Psoas muscle (tissue), 8 donors: ENCODE measurements at regions of chr17 and their contacts with region 1.

Region 1: DNA sequence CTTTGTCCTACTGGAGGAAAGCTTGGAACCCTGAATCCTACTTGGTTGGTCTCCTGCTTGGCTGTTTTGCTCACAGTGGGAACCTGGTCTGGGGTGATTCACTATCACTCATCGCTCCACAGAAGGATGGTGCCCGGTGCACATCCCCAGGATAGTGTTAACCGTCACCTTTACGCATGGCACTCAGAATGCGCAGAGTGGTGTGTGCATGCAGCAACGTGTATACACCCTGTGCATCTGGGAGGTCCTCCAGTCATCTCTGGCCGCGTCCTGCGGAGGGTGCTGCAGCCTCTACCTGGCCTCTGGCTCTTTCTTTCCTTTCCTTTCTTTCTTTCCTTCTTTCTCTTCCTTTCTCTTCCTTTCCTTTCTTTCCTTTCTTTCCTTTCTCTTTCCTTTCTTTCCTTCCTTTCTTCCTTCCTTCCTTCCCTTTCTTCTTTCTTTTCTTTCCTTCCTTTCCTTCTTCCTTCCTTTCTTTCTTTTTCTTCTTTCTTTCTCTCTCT is 13.2 kb downstream of the SOCS3 start:
- DNase-seq: no peak
- ATAC-seq: peak in 3 of 4 donors; percentile 8 to 33 (median 15)
- H3K4me3 ChIP-seq: no peak overlapping the region
- H3K27ac ChIP-seq: peak overlapping the region; percentile 98
- H3K4me1 ChIP-seq: peaks cover 69% of the 10 kb centered on the region
- H3K27me3 ChIP-seq: no peaks in the 10 kb centered on the region
- CTCF ChIP-seq: no peak

Region 2: DNA sequence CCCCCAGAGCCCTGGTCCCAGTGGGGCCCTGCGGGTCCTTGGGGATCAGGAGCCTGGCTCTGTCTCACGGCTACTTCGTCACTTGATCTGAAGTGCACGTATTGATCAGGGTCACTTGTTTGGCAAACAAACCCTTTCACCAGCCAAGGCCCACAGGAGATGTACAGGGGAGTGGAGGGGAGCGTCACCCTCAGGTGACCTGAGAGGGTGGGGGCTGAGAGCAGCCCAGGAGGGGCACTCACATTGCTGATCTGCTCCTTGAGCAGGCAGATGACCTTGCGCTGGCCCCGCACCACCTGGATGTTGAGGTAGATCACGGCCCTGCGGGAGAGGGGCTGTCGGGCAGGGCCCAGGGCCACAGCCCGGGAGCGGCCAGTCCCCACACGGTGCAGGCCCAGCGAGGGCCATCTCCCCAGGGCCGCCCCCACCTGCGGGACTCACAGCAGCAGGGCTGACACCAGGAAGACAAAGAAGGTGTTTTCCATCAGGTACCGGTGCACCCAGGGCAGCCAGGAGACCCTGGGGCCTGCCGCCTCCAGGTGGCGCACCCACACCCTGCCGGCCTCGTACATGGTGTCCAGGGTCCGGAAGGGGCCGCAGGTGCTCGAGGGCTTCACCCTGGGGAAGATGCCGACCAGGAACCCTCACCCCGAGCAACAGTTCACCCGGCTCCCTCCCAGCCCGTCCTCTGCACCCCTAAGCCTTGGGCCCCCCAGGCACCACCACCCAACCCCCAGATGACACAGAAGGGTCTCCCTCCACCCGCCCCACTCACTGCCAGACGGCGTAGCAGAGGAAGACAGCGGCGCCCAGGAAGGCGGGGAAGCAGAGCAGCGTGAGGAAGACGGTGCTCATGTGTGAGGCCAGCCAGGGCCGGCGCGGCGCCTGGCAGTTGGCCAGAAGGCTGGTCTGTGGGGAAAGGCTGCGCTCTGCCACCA is 229.4 kb before region 1 on chr17:
- intact Hi-C with region 1: no loop called
- DNase-seq: peak in 1 of 2 donors; percentile 48
- ATAC-seq: no peak
- H3K4me3 ChIP-seq: no peak overlapping the region
- H3K27ac ChIP-seq: no peak overlapping the region
- H3K4me1 ChIP-seq: peaks cover 7% of the 10 kb centered on the region
- H3K27me3 ChIP-seq: peaks cover 0 to 2% (median 0%) of the 10 kb centered on the region in 3 donors
- CTCF ChIP-seq: peak; percentile 25

Region 3: DNA sequence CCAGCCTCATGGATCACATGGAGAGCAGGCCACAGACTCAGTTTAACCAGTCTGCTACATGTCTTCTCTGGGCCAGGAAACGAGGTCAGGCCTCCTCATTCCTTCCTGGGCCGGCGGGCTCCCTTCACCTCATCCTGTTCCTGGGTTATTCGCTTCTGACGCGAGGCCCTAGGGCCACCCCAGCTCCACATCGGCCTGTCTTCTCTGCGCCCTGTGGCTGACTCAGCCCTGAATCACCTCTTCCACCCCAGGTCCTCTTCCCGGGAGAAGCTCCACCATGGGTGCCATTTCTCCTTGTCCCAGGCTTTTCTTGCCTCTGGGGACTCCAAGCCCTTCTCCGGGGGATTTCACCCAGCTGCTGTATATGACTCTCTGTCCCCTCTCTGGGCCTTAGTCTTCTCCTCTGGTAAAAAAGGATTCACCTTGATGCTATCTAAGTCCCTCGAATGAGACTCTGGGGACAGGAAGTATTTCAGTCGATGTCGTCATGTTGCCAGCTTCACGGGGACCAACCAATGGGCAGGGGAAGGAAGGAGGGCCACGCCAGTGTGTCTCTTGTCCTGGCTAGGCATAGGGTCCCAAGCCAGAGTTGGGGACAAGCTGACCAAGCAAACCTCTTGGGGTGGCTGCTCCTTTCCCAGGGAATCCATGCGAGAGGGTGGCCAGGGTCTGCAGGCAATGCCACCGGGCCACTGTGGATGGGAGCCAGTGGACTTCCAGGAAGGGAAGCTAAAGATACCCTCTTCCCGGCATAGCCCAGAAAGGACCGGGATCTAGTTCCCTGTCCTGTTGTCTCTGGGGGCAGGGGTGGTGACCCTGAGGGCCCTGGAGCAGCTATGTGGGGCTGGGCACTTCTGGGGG is 45.5 kb before region 1 on chr17:
- intact Hi-C with region 1: loop called in 1 of 2 experiments (anchors 2 kb)
- DNase-seq: no peak
- ATAC-seq: peak in 1 of 4 donors; percentile 41
- H3K4me3 ChIP-seq: no peak overlapping the region
- H3K27ac ChIP-seq: no peak overlapping the region
- H3K4me1 ChIP-seq: peaks cover 11% of the 10 kb centered on the region
- H3K27me3 ChIP-seq: no peaks in the 10 kb centered on the region
- CTCF ChIP-seq: no peak